Sigmoid colon (tissue), 7 donors: ENCODE measurements at regions of chr3 and their contacts with region 1.

Region 1: GRCh38 chr3:97821810-97822775 is at the start of gene CRYBG3:
- DNase-seq: peak; percentile 91
- H3K4me3 ChIP-seq: peak within 1 kb of the TSS; percentile 68 to 86 (median 84)
- H3K27ac ChIP-seq: peak within 1 kb of the TSS; percentile 89 to 94 (median 90)
- H3K4me1 ChIP-seq: peaks cover 0 to 36% (median 27%) of the 10 kb centered on the region in 4 donors
- H3K27me3 ChIP-seq: no peaks in the 10 kb centered on the region
- CTCF ChIP-seq: peak in 1 of 4 experiments; percentile 19
- EP300 ChIP-seq: no peak
- POLR2A ChIP-seq: peak; percentile 55 to 68
- total RNA-seq, gene CRYBG3: 37.8 to 60.2 (median 43.2) TPM

Region 2: DNA sequence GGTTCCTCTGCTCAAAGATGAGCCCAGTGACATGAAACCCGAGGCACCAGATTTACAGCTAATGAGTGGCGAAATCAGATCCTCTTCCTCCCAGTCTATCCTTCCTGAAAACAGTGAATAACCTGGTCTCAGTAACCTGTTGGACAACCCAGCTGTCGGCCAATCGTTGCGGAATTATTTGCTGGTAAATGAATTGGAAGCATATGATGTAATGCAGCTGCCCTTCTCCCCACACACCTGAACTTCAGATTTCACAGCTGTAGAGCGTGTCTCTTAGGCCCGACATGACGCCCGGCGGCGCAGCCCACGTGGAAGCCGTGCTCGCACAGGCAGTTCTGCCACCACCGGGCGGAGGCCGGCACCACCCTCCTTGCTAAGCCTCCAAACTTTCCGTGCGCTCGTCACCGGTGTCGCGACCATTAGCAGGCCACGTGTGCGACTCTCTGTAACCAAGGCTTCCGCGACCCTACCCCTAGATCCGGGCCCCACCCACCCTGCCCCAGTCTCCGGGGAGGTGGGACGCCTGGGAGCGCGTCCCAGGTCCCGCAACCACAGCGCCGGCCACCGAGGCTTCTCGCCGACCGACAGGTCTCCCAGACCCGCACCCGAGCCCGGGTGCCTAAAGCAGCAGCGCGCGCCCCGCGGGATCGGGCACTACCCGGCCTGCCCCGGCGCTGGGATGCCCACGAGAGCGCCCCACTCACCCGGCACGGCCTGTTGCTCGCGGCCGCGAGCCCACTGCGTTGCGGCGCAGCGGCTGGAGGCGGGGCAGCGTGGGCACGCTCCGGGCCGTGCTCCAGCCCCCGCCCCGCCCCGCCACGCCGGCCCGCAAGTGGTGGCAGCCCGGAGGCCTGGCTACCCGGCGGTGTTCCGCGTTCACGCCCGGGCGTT is 149.8 kb after region 1 on chr3 and contains the start of gene RIOX2:
- intact Hi-C with region 1: loop called (anchors 5 kb)
- DNase-seq: peak; percentile 85
- H3K4me3 ChIP-seq: peak within 1 kb of the TSS; percentile 66 to 89 (median 80)
- H3K27ac ChIP-seq: peak within 1 kb of the TSS; percentile 87 to 94 (median 90)
- H3K4me1 ChIP-seq: peaks cover 0 to 39% (median 15%) of the 10 kb centered on the region in 4 donors
- H3K27me3 ChIP-seq: no peaks in the 10 kb centered on the region
- CTCF ChIP-seq: no peak
- EP300 ChIP-seq: no peak
- POLR2A ChIP-seq: peak in 1 of 2 donors; percentile 25
- total RNA-seq, gene RIOX2: 16.8 to 23.5 (median 21.0) TPM